AG04449 (cell line): ENCODE measurements at regions of chr11 and their contacts with region 1.

Region 1: GRCh38 chr11:17063171-17064002 is 14.1 kb downstream of the RPS13 start:
- DNase-seq: no peak
- H3K4me3 ChIP-seq: no peak overlapping the region
- CTCF ChIP-seq: peak; percentile 81

Region 2: DNA sequence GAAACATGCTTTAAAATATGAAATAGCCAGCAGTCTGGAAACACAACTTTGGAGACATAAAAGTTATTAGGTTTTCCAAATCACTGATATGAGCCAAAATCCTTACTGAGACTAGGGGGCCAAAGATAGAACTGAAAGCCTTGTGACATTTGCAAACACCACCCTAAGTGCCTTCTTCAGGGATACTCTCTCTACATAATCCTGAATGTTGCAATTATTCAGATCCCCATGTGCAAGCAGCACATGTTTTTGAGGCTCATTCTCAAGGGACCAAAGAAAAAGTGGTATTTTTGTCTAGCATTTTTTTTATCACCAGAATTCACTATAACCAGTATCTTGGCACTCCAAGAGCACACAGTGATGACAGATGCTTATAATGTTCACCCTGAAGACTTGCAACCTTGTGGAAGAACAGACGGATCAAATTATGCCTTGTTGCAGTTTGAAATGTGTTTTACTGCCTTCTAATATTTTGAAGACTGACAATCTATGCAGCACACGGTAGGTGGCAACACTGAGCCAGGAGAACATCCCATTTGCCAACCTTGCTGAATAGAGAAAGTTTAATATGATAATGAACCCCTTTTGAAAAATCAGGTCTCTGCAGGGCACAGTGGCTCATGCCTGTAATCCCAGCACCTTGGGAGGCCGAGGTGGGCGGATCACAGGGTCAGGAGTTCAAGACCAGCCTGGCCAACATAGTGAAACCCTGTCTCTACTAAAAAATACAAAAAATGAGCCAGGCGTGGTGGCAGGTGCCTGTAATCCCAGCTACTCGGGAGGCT is 127.7 kb before region 1 on chr11:
- CTCF ChIA-PET with region 1: interaction called, 26 read pairs
- POLR2A ChIA-PET with region 1: no interaction called
- DNase-seq: no peak
- H3K4me3 ChIP-seq: no peak overlapping the region
- CTCF ChIP-seq: peak; percentile 68

Region 3: DNA sequence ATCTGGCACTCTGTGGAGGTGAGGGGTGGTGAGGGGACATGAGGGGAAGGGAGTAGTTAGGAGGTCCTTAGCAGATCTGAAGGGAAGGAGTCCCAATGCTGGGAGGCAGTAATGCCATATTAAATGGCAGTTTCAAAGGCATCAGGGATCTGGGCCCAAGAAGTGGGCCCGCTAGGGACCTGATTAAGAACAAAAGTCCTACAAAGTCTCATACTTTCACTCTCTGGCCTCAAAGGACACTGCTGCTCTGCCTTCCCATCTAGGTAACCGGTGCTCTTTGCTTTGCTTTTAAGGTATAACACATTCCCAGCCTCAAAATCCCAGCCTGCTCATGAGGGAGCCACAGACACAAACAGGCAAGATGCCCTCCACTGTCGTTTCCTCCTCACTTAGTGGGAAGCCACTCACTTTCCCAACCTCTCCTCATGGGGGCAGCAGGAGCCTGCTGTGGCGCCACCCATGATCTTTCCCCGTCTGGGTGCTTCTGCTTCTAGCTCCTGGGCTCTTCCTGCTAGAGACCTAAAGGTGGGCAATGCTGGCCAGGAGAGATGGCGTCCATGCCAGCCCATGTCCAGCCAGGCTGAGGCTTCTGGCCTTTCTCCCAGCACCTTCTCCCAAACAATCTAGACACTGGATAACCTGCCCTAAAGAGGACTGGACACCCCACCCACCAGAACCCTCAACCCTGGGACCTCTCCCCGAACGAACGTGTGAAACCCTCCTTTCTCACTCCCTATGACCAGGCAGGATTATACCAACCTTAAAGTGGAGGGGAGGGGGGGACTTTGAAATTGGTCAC is 117.5 kb before region 1 on chr11:
- CTCF ChIA-PET with region 1: interaction called, 35 read pairs
- POLR2A ChIA-PET with region 1: no interaction called
- DNase-seq: peak; percentile 2
- H3K4me3 ChIP-seq: no peak overlapping the region
- CTCF ChIP-seq: peak; percentile 56

Region 4: DNA sequence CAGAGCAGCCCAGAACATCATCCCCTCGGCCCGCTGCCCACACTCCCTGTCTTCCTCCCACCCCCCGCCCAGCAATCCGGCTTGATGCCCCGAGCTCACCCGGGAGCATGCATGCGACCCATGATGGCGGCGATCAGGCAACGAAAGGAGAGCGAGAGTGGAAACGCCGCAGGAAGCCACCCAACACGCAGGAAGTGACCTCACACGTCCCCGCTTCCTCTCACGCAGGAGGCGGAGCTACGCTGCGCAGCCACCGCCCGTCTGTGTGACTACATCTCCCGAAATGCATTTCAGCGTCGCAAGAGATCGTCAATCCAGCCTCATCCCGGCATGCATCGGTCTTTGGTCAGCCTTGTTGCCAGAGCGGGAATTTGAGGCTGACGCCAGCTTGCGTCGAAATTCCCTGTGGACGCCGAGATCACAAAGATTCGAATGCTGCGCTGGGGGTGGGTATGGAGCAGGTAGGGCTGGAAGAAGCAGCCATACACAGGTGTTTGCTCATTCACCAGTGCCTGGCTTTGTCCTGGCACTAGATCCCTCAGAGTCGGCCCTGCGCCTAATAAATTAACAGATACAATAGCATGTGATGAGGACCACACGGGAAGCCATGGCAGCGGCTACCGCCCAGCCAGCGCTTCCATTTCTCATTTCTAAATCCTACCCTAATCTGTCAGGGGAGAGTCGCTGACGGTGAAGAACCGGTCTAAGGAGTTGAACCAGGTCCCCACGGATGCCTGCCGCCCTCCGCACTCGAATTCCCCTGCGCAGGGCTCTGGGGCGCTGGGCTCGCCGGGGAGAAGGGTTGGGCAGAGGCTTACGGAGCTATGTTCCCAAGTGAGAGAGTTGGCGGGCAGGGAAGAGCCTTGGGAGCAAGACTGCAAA is 14.4 kb after region 1 on chr11 and contains the start of gene RPS13:
- CTCF ChIA-PET with region 1: interaction called, 15 read pairs
- POLR2A ChIA-PET with region 1: interaction called, 5 read pairs
- DNase-seq: peak; percentile 91
- H3K4me3 ChIP-seq: peak within 1 kb of the TSS; percentile 98
- CTCF ChIP-seq: no peak